B cell (primary cell): ENCODE measurements at regions of chr14 and their contacts with region 1.

Region 1: DNA sequence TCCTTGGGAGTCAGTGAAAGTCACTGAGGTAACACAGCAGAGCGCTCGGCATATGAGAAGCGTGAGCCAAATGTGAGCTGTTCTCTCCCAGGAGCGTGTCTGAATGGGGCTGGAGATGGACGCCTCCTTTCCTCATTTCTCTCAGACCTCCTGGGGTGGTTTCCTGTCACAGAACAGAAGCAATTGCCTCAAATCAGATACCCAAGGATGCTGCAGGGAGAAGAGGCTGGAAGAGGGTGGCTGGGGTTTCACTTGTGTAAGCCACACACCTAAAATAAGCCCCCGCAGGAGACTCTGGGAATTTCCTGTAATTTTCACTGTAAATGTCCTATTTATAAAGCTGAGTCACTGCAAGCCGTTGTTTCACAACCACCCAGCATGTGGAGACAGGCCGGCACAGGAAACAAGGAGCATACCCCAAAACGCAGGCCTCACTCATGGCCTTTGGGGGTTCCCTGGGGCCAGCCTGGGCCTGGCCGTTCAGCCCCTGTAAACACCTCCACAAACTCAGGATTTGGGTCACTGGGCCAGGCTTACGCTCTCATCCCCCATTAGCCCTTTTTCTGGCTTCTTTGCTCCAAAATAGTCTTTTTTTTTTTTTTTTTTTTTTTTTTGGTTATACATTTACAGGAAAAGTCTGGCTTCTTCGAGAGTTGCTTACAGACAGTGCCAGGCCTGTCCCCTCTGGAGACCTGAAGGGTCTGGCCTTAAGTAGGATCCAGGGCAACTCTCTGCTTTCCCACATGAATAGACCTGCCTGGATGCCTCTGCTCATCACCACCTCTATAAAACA is 55.3 kb downstream of the VCPKMT start:
- DNase-seq: peak; percentile 34
- ATAC-seq: no peak
- H3K4me3 ChIP-seq: peak overlapping the region in 3 of 5 experiments; percentile 0 to 9 (median 2)
- H3K4me3 Mint-ChIP-seq: peak overlapping the region; percentile 95
- H3K27ac ChIP-seq: peak overlapping the region; percentile 92 to 96
- H3K27ac Mint-ChIP-seq: peak overlapping the region; percentile 100
- H3K4me1 ChIP-seq: peaks cover 60 to 82% of the 10 kb centered on the region in 2 donors
- H3K4me1 Mint-ChIP-seq: peaks cover 87% of the 10 kb centered on the region
- H3K27me3 ChIP-seq: no peaks in the 10 kb centered on the region
- H3K27me3 Mint-ChIP-seq: no peaks in the 10 kb centered on the region
- CTCF ChIP-seq: no peak

Region 2: DNA sequence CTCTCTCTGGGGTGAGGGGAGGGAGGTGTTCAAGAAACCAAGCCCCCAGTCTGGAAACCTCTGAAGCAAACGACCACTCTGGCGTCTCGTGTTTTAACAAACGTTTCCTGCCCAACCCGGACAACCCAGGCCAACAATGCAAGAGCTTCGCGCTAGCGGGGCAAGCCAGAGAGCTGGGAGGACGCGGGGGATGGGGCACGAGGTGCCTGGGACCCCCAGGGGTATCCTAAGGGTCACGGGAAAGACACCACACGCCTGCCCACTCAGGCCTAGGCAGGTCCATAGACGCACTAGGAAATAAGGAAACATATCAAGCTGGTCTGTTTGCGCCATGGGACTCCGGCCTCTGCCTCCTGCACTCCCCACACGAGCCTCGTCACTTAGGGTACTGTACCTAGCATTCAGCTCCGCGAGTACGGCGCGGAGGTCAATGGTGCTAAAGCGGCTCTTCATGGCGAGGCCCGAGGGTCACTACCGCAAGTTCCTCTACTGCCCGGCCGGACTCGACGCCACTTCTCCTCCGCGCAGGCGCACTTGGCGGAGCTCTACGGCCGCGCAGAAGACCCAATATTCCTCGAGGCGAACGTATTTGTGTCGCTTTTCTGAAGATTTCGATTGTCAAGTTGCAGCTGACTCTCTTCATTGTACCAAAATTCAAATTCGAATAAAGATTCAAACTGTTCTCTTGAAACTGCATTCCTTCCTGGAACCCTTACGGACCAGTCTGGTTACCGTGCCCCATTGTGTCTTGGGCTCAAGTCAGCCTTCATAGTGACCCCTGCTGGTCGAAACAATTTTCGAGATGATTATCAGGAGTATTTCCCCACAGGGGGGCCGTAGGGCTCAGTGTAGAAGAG is 208.5 kb before region 1 on chr14 and contains the start of gene NEMF:
- CTCF ChIA-PET with region 1: interaction called, 16 read pairs
- POLR2A ChIA-PET with region 1: interaction called, 13 read pairs
- intact Hi-C with region 1: no loop called
- DNase-seq: peak; percentile 94
- ATAC-seq: peak; percentile 84
- H3K4me3 ChIP-seq: peak within 1 kb of the TSS; percentile 78 to 99 (median 99)
- H3K4me3 Mint-ChIP-seq: peak within 1 kb of the TSS; percentile 98
- H3K27ac ChIP-seq: peak within 1 kb of the TSS; percentile 72 to 88
- H3K27ac Mint-ChIP-seq: peak within 1 kb of the TSS; percentile 98
- H3K4me1 ChIP-seq: peaks cover 20 to 31% of the 10 kb centered on the region in 2 donors
- H3K4me1 Mint-ChIP-seq: peaks cover 44% of the 10 kb centered on the region
- H3K27me3 ChIP-seq: no peaks in the 10 kb centered on the region
- H3K27me3 Mint-ChIP-seq: no peaks in the 10 kb centered on the region
- CTCF ChIP-seq: peak; percentile 86
- total RNA-seq, gene NEMF: 127 and 146 TPM in 2 replicates

Region 3: DNA sequence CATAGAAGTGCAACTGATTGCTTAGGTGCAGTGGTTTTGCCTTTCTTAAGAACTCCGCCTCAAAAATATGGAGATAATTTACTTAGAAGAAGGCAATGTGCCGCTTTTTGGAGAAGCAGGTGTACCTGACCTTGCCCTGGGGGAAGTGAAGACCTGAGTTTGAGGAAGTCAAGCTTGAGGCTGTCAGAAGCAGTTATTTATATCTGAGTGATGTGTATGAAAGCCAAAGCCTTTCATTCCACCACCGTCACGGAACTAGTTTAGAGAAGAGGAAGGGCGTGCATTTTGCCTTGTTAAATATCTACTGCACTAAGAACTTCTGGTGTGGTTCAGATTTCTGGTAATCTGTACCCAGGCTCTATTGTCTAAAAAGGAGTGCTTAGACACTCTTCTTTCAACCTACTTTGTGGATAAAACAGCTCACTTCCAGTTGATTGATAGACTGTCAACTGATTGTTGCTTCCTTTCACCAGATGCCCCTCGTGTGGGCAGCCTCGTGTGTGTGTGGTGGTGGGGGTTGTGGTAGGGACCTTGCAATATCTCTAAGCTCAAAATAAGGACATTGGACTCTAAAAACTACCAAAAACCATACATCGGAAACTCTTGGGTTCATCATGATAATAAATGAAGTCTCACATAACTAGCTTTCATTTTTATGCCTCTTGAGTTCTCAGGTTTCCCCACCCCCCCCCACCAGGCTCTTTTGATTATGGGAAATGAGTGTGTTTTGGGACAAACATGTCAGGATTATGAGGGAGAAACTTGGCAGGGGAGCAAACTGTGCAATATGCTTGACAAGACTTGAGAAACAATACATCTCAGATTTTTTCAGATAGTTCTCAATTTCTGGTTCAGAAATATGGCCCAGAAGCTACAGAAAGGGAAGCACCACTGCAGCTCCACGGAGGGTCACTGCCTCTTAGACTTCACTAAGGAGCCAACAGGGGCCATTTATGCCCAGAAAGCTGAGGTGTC is 89.6 kb before region 1 on chr14:
- CTCF ChIA-PET with region 1: interaction called, 7 read pairs
- POLR2A ChIA-PET with region 1: interaction called, 8 read pairs
- intact Hi-C with region 1: loop called (anchors 1 kb)
- DNase-seq: peak; percentile 92
- ATAC-seq: peak; percentile 85
- H3K4me3 ChIP-seq: peak overlapping the region in 2 of 5 experiments; percentile 30 to 32
- H3K4me3 Mint-ChIP-seq: peak overlapping the region; percentile 55
- H3K27ac ChIP-seq: peak overlapping the region; percentile 98 to 99
- H3K27ac Mint-ChIP-seq: peak overlapping the region; percentile 97
- H3K4me1 ChIP-seq: peaks cover 57 to 70% of the 10 kb centered on the region in 2 donors
- H3K4me1 Mint-ChIP-seq: peaks cover 62% of the 10 kb centered on the region
- H3K27me3 ChIP-seq: no peaks in the 10 kb centered on the region
- H3K27me3 Mint-ChIP-seq: no peaks in the 10 kb centered on the region
- CTCF ChIP-seq: no peak

Region 4: DNA sequence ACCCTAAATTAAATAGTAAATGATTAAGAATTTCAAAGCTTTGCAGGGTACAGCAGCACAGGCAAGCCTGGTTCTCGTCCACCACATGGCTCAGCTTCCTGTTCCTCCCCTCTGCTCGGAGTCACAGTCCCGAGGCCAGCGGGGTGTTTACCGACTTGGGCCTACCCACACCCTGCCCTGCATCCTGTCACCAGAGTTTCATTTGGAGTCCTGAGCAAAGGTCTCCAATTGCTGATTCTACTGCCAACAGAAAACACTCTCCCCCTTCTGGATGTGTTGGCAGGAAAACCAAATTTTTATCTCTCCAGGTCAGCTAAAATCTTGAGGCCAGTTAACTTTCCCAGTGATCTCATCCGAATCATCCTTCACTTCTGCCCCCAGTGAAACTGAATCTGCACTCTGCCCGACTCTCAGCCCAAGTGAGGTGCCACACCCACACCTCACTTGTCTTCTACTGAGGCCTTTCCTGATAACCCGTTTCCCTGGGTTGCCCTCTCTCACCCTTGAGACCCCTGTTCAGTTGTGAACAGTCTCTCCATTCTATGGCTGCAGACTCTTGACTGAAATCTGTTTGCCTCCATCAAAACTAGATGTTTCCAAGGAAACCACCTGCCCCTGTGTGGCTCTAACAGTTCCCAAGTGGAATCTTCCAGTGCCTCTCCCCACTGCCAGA is 15.9 kb before region 1 on chr14:
- CTCF ChIA-PET with region 1: interaction called, 36 read pairs
- POLR2A ChIA-PET with region 1: interaction called, 18 read pairs
- intact Hi-C with region 1: loop called (anchors 1 kb)
- DNase-seq: peak; percentile 75
- ATAC-seq: peak; percentile 71
- H3K4me3 ChIP-seq: no peak overlapping the region
- H3K4me3 Mint-ChIP-seq: peak overlapping the region; percentile 49
- H3K27ac ChIP-seq: peak overlapping the region; percentile 92 to 95
- H3K27ac Mint-ChIP-seq: peak overlapping the region; percentile 88
- H3K4me1 ChIP-seq: peaks cover 60 to 62% of the 10 kb centered on the region in 2 donors
- H3K4me1 Mint-ChIP-seq: peaks cover 76% of the 10 kb centered on the region
- H3K27me3 ChIP-seq: no peaks in the 10 kb centered on the region
- H3K27me3 Mint-ChIP-seq: no peaks in the 10 kb centered on the region
- CTCF ChIP-seq: no peak

Region 5: GRCh38 chr14:50099335-50099734 is 38.3 kb after region 1 on chr14:
- CTCF ChIA-PET with region 1: interaction called, 35 read pairs
- POLR2A ChIA-PET with region 1: interaction called, 10 read pairs
- intact Hi-C with region 1: loop called (anchors 1 kb)
- DNase-seq: no peak
- ATAC-seq: no peak
- H3K4me3 ChIP-seq: no peak overlapping the region
- H3K4me3 Mint-ChIP-seq: no peak overlapping the region
- H3K27ac ChIP-seq: no peak overlapping the region
- H3K27ac Mint-ChIP-seq: peak overlapping the region; percentile 28
- H3K4me1 ChIP-seq: peaks cover 42 to 63% of the 10 kb centered on the region in 2 donors
- H3K4me1 Mint-ChIP-seq: peaks cover 66% of the 10 kb centered on the region
- H3K27me3 ChIP-seq: no peaks in the 10 kb centered on the region
- H3K27me3 Mint-ChIP-seq: no peaks in the 10 kb centered on the region
- CTCF ChIP-seq: no peak

Region 6: DNA sequence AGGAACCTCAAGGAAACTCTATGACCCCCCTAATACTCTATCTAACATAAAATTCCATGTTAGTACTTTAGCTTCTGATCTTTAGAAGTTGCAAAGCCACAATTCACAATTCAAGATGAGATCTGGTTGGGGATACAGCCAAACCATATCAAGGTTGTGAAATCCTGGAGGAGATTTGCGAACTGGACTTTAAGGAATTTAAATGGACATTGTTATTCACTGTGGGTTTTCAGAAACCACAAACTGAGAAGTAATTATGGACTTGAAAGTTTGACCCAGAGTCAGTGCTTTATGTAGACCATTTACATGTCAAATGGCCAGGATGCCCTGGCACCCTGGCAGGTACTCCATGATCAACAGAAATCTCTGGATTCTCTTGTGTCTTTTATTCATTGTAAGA is 349.9 kb after region 1 on chr14:
- CTCF ChIA-PET with region 1: no interaction called
- POLR2A ChIA-PET with region 1: no interaction called
- intact Hi-C with region 1: no loop called
- DNase-seq: no peak
- ATAC-seq: no peak
- H3K4me3 ChIP-seq: no peak overlapping the region
- H3K4me3 Mint-ChIP-seq: no peak overlapping the region
- H3K27ac ChIP-seq: no peak overlapping the region
- H3K27ac Mint-ChIP-seq: no peak overlapping the region
- H3K4me1 ChIP-seq: no peaks in the 10 kb centered on the region
- H3K4me1 Mint-ChIP-seq: no peaks in the 10 kb centered on the region
- H3K27me3 ChIP-seq: no peaks in the 10 kb centered on the region
- H3K27me3 Mint-ChIP-seq: no peaks in the 10 kb centered on the region
- CTCF ChIP-seq: no peak